Mammary epithelial cell (primary cell): ENCODE measurements at regions of chr17 and their contacts with region 1.

Region 1: DNA sequence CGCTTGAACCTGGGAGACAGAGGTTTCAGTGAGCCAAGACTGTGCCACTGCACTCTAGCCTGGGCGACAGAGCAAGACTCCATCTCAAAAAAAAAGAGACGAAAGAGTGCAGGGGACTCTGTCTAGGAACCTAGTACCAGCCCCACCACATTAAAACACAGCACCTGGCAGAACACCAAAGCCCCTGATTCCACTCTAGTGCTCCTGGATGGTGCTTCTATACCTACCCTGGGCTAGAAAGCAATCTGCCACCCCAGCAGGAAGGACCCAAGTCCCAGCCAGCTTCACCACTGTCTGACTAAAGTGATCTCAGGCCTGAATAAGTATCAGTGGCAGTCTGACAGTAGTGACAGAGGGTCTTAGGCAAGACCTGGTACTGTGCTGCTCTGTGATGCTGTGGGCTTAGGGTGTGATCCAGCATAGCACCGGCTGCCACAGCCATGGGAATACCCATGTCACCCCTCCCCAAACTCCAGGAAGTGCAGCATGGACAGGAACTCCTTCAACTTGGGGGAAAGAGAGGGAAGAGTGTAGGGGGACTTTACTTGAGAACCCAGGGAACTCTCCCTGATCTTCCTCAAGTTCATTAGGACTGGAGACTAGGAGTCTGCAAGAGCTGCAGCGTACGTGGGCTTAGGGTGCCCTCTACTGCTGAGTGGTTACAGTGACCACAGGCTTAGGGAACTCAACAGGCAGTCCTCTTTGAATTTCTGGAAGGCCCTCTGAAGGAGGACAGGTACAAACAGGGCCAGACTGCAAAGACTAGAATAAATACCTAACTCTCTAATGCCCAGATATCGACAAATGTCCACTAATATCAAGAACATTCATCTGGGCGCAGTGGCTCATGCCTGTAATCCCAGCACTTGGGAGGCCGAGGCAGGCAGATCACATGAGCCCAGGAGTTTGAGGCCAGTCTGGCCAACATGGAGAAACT is 30.0 kb upstream of the RNF43 start:
- DNase-seq: peak; percentile 68
- H3K4me3 ChIP-seq: no peak overlapping the region
- H3K27ac ChIP-seq: no peak overlapping the region
- H3K4me1 ChIP-seq: no peaks in the 10 kb centered on the region
- H3K27me3 ChIP-seq: no peaks in the 10 kb centered on the region
- CTCF ChIP-seq: peak; percentile 79 to 96

Region 2: GRCh38 chr17:58121925-58122324 is 325.4 kb before region 1 on chr17:
- CTCF ChIA-PET with region 1: no interaction called
- dilution Hi-C with region 1: no loop called
- in situ Hi-C with region 1: no loop called
- intact Hi-C with region 1: loop called (anchors 1 kb)
- DNase-seq: peak; percentile 20
- H3K4me3 ChIP-seq: no peak overlapping the region
- H3K27ac ChIP-seq: no peak overlapping the region
- H3K4me1 ChIP-seq: no peaks in the 10 kb centered on the region
- H3K27me3 ChIP-seq: peaks cover 1% of the 10 kb centered on the region
- CTCF ChIP-seq: peak; percentile 33 to 58

Region 3: GRCh38 chr17:58249270-58250133 is 197.8 kb before region 1 on chr17:
- CTCF ChIA-PET with region 1: no interaction called
- dilution Hi-C with region 1: no loop called
- in situ Hi-C with region 1: no loop called
- intact Hi-C with region 1: loop called (anchors 1 kb)
- DNase-seq: peak; percentile 32
- H3K4me3 ChIP-seq: peak overlapping the region; percentile 10 to 62 (median 53)
- H3K27ac ChIP-seq: no peak overlapping the region
- H3K4me1 ChIP-seq: peaks cover 8% of the 10 kb centered on the region
- H3K27me3 ChIP-seq: peaks cover 6% of the 10 kb centered on the region
- CTCF ChIP-seq: peak; percentile 78 to 89

Region 4: GRCh38 chr17:58303971-58304725 is 143.2 kb before region 1 on chr17:
- CTCF ChIA-PET with region 1: no interaction called
- dilution Hi-C with region 1: no loop called
- in situ Hi-C with region 1: no loop called
- intact Hi-C with region 1: loop called (anchors 1 kb)
- DNase-seq: peak; percentile 41
- H3K4me3 ChIP-seq: no peak overlapping the region
- H3K27ac ChIP-seq: no peak overlapping the region
- H3K4me1 ChIP-seq: no peaks in the 10 kb centered on the region
- H3K27me3 ChIP-seq: no peaks in the 10 kb centered on the region
- CTCF ChIP-seq: peak; percentile 79 to 87

Region 5: DNA sequence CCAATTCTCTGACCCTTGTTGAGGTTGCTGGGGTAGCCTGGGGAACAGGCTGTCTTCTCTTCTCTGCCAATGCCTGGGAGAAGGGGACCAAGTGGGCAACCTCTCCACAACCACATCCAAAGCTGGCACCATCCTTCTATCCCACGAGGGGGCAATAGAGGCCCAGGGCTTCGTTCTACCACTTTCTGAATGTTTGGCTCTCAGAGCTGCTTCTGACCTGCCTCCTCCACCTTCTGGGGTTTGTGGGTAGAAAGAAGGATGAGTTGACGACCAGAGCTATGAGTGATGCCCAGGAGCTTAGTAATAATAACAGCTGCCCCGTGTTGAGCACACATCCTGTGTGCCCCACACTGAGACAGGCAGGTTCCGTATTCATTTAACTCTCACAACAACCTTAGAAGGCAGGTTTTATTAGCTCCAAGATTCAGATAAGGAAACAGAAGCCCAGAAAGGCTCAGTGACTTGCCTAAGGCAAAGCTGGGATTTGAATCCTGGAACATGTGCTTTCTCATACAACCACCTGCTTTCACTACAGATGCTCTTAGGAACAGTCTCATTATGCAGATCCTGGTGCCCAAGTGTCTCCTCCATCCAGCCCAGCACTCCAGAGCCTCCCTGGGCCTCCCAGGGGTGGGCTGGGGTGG is 129.8 kb before region 1 on chr17:
- CTCF ChIA-PET with region 1: interaction called, 15 read pairs
- dilution Hi-C with region 1: no loop called
- in situ Hi-C with region 1: loop called (anchors 5 kb)
- intact Hi-C with region 1: loop called (anchors 1 kb)
- DNase-seq: peak; percentile 90
- H3K4me3 ChIP-seq: no peak overlapping the region
- H3K27ac ChIP-seq: no peak overlapping the region
- H3K4me1 ChIP-seq: peaks cover 6% of the 10 kb centered on the region
- H3K27me3 ChIP-seq: no peaks in the 10 kb centered on the region
- CTCF ChIP-seq: peak; percentile 92 to 93

Region 6: GRCh38 chr17:58411438-58411797 is 35.9 kb before region 1 on chr17:
- CTCF ChIA-PET with region 1: no interaction called
- dilution Hi-C with region 1: no loop called
- in situ Hi-C with region 1: no loop called
- intact Hi-C with region 1: no loop called
- DNase-seq: peak; percentile 59
- H3K4me3 ChIP-seq: peak overlapping the region in 1 of 3 experiments; percentile 28
- H3K27ac ChIP-seq: peak overlapping the region; percentile 47
- H3K4me1 ChIP-seq: peaks cover 31% of the 10 kb centered on the region
- H3K27me3 ChIP-seq: no peaks in the 10 kb centered on the region
- CTCF ChIP-seq: no peak

Region 7: DNA sequence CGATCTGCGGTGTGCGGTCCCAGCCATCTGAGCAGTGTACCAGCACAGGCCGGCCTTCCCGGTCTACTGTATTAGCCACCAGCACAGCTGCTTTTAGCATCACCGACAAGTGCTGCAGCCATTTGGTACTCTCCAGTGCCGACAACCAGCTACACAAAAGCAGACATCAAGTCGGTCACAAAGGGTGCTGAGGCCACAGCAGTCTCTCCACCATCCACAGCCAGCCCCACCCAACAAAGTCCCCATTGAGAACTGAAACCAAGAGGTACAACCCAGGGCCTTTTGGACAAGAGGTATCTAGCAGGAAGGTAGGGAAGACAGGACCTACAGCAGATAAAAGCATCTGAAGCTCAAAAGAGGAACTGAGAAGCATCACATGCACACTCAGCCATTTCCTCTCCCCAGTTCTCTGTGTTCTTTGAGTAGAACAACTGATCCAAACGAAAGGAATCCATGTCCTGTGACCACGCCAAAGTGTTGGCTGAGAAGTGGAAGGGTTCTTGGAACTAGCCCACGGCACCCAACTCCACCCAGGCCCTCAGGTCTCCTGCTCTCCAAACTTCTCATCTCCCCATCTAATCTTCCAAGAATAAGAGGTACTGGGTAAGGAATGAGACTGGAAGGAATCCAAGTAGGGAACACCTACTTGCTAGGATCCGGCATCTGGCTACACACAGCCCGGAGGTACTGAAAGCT is 57.7 kb after region 1 on chr17:
- CTCF ChIA-PET with region 1: no interaction called
- dilution Hi-C with region 1: no loop called
- in situ Hi-C with region 1: no loop called
- intact Hi-C with region 1: no loop called
- DNase-seq: no peak
- H3K4me3 ChIP-seq: no peak overlapping the region
- H3K27ac ChIP-seq: no peak overlapping the region
- H3K4me1 ChIP-seq: no peaks in the 10 kb centered on the region
- H3K27me3 ChIP-seq: no peaks in the 10 kb centered on the region
- CTCF ChIP-seq: no peak